GM18951 (cell line): ENCODE measurements at regions of chr11 and their contacts with region 1.

Region 1: GRCh38 chr11:35617687-35618496 is at the start of gene FJX1:
- POLR2A ChIP-seq: peak; percentile 36

Region 2: DNA sequence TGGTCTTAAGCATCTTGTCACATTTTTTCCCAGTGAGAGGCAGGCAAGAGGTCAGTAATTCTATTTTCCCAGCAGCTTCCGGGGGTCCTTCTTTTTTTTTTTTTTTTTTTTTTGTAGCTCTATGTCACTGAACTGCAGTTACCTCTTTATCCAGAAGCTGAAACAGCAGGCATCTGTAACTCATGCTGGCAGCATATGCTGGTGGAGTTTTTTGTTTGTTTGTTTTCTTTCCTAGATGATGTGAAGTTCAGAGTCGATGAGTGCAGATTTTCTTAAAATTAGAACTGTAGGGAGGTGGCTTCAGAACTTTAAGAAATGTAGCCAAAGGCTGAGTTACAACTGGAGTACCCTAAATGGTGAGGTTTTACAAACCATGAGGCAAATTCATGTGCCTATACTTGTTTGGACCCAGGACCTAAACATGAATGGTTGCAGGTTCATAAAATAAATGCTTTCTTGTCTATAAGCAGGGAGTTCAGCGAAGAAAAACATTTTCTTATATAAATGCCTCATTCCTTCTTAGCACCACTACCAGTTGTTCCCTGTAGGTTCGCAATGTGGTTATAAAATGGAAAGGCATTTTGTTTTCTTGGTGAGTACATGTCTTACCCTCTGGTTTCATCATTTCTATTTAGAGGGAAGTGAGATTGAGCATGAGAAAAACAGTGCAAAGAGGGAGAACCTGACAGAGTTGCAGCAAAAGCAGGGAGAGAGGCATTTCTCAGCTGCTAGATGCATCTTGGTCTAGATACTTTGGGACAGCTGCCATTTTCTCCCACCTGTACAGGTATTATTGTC is 128.7 kb after region 1 on chr11:
- in situ Hi-C with region 1: no loop called
- POLR2A ChIP-seq: no peak

Region 3: GRCh38 chr11:35800970-35801953 is 183.4 kb after region 1 on chr11:
- in situ Hi-C with region 1: loop called (anchors 25 kb)
- POLR2A ChIP-seq: no peak

Region 4: GRCh38 chr11:36056160-36056751 is 438.4 kb after region 1 on chr11:
- in situ Hi-C with region 1: loop called (anchors 25 kb)
- POLR2A ChIP-seq: no peak

Region 5: GRCh38 chr11:36265793-36266628 is 648.1 kb after region 1 on chr11:
- in situ Hi-C with region 1: loop called (anchors 10 kb)
- POLR2A ChIP-seq: no peak